ENCODE measurements at regions of chr11 and their contacts with region 1.

Region 1: GRCh38 chr11:33920838-33921613 is 29.1 kb upstream of the LMO2 start:
- DNase-seq: peak; percentile 44
- ATAC-seq: peak; percentile 97
- H3K4me3 Mint-ChIP-seq: peak overlapping the region; percentile 47
- H3K27ac Mint-ChIP-seq: peak overlapping the region; percentile 70
- H3K4me1 Mint-ChIP-seq: peaks cover 26% of the 10 kb centered on the region
- H3K27me3 Mint-ChIP-seq: peaks cover 28% of the 10 kb centered on the region
- CTCF ChIP-seq: no peak

Region 2: DNA sequence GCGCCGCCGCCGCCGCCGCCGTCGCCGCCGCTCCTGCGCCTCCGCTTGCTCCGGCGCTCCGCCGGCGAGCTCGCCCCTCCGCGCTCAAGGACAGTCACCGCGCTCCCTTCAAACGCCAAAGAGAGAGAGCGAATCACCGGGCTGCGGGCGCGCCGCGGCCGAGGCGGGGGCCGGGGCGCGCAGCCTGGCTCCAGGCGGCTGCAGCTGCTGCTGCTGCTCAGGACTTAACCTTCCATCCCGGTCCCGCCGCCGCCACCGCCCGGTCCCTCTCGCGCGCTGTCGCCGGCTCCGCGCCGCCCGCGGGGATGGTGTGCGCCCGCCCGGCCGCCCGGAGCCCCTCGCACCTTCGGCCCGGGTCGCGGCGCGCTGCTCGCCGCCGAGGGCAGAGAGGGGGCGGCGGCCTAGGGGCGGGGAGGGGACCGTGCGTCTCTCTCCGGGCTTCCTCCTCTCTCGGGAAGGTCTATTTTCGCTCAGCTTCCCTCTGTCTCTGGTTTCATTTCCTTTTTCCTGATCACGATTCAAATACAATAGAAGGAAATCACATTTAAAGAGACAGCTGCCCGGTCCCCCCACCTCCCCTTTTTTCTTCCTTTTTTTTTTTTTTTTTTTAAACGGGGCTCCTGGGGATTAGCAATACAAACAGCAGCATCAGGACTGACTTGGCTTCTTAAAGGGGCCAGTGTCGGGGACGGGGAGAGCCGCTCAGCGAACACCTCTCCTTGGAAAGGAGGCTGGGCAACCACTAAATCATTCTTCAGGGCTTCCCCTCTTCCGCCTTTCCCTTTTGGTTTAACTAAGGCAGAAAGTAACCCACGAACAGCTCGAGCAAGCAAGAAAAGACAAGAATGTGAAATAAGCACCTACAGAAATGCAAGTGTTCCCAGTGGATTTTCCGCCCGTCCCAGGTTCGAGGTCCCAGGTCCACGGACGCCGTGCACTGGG is 51.3 kb before region 1 on chr11:
- CTCF ChIA-PET with region 1: no interaction called
- POLR2A ChIA-PET with region 1: interaction called, 6 read pairs
- intact Hi-C with region 1: loop called (anchors 1 kb)
- DNase-seq: peak; percentile 57
- ATAC-seq: peak; percentile 72
- H3K4me3 Mint-ChIP-seq: peak overlapping the region; percentile 92
- H3K27ac Mint-ChIP-seq: peak overlapping the region; percentile 74
- H3K4me1 Mint-ChIP-seq: peaks cover 36% of the 10 kb centered on the region
- H3K27me3 Mint-ChIP-seq: no peaks in the 10 kb centered on the region
- CTCF ChIP-seq: no peak

Region 3: GRCh38 chr11:33904102-33904501 is 16.9 kb before region 1 on chr11:
- CTCF ChIA-PET with region 1: no interaction called
- POLR2A ChIA-PET with region 1: no interaction called
- intact Hi-C with region 1: no loop called
- DNase-seq: no peak
- ATAC-seq: no peak
- H3K4me3 Mint-ChIP-seq: no peak overlapping the region
- H3K27ac Mint-ChIP-seq: no peak overlapping the region
- H3K4me1 Mint-ChIP-seq: peaks cover 30% of the 10 kb centered on the region
- H3K27me3 Mint-ChIP-seq: no peaks in the 10 kb centered on the region
- CTCF ChIP-seq: no peak

Region 4: GRCh38 chr11:33942954-33943353 is 21.9 kb after region 1 on chr11:
- CTCF ChIA-PET with region 1: no interaction called
- POLR2A ChIA-PET with region 1: interaction called, 4 read pairs
- intact Hi-C with region 1: loop called (anchors 1 kb)
- DNase-seq: no peak
- ATAC-seq: peak; percentile 77
- H3K4me3 Mint-ChIP-seq: peak overlapping the region; percentile 29
- H3K27ac Mint-ChIP-seq: peak overlapping the region; percentile 32
- H3K4me1 Mint-ChIP-seq: peaks cover 40% of the 10 kb centered on the region
- H3K27me3 Mint-ChIP-seq: peaks cover 6% of the 10 kb centered on the region
- CTCF ChIP-seq: no peak

Measured in activated B cell treated with CpG ODN at 0.5 μM for 24 hours (primary cell).